ENCODE measurements at regions of chr15 and their contacts with region 1.

Region 1: DNA sequence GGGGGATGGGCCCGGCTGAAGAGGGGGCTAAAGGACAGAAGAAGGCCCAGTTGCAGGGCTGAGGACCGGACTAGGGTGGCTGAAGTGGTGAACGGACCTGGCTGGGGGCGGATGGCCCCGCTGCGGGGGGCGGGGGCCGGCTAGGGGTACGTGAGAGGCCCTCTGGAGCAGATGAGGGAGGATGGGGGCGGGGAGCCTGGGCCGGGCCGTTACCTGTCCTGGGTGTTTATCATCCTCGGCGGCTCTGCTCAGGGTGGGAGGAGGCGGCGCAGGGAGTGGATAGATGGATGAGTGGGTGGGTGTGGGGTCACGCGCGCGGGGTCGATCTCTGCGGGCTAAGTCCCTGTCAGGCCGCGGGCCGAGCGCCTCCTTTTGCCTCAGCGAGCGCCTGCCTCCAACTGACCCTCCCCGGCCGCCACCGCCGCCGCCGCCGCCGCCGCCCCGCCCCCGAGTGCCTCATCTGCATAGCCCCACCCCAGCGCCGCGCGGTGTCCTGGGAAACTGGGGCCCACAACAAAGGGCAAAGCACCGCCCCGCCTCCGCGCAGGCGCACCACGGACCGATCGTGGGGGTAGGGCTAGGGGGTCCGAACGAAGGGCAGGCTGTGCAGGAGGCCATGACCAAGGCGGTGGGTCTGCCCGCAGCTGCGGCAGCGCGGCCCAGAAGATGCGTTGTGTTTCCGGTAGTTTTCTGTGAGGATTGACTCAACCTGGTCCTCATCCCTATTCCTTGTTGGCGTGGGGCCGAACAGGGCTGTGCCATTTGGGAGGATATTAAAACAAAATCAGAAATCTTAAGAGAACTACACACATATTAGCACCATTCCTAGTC is 72.4 kb downstream of the RBPMS2 start:
- DNase-seq: peak; percentile 97
- H3K4me3 Mint-ChIP-seq: peak overlapping the region; percentile 84
- H3K27ac Mint-ChIP-seq: peak overlapping the region; percentile 81
- H3K4me1 Mint-ChIP-seq: peaks cover 50% of the 10 kb centered on the region
- H3K27me3 Mint-ChIP-seq: no peaks in the 10 kb centered on the region

Region 2: DNA sequence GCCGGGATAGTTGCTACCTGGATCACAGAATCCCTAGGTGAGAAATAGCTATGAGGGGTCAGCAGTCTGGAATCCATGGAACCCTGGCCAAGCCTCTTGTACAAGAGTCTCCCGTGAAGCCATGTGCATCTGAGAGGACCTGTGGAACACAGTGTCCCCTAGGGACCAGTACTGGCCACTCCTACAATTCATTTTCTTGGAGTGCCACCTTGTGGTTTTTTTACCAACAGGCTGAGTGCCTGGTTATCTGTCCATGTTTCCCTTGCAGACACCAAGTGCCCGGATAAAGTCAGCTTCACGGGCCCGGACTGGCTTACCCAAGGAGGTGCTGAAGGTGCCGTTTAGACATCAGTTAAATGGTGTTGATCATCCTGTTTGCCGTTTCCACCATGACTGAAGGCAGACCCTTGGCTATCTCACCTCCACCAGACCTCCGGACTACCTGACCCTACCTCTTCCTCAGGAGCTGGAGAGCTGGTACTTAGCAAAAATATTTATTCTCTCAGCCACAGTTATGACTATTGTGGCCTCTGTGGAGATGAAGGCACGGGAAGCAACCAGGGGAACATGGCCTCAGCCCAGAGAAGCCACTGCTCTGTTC is 21.5 kb before region 1 on chr15:
- CTCF ChIA-PET with region 1: interaction called, 31 read pairs
- intact Hi-C with region 1: no loop called
- DNase-seq: peak; percentile 38
- H3K4me3 Mint-ChIP-seq: no peak overlapping the region
- H3K27ac Mint-ChIP-seq: no peak overlapping the region
- H3K4me1 Mint-ChIP-seq: peaks cover 2% of the 10 kb centered on the region
- H3K27me3 Mint-ChIP-seq: no peaks in the 10 kb centered on the region

Region 3: GRCh38 chr15:64690578-64691296 is 12.3 kb before region 1 on chr15:
- CTCF ChIA-PET with region 1: interaction called, 31 read pairs
- intact Hi-C with region 1: no loop called
- DNase-seq: no peak
- H3K4me3 Mint-ChIP-seq: no peak overlapping the region
- H3K27ac Mint-ChIP-seq: no peak overlapping the region
- H3K4me1 Mint-ChIP-seq: peaks cover 17% of the 10 kb centered on the region
- H3K27me3 Mint-ChIP-seq: no peaks in the 10 kb centered on the region

Region 4: GRCh38 chr15:65133548-65134200 is 430.6 kb after region 1 on chr15 and contains the start of gene PDCD7:
- CTCF ChIA-PET with region 1: no interaction called
- intact Hi-C with region 1: no loop called
- DNase-seq: peak; percentile 90
- H3K4me3 Mint-ChIP-seq: peak within 1 kb of the TSS; percentile 85
- H3K27ac Mint-ChIP-seq: peak within 1 kb of the TSS; percentile 82
- H3K4me1 Mint-ChIP-seq: peaks cover 23% of the 10 kb centered on the region
- H3K27me3 Mint-ChIP-seq: no peaks in the 10 kb centered on the region
- total RNA-seq, gene PDCD7: 28.6 to 31.5 TPM

Measured in activated naive CD4-positive, alpha-beta T cell treated with anti-CD3 and anti-CD28 coated beads for 36 hours (primary cell).